ENCODE measurements at regions of chr5 and their contacts with region 1.

Region 1: GRCh38 chr5:118919016-118919415 is 69.3 kb downstream of the DTWD2 start:
- DNase-seq: no peak
- CTCF ChIP-seq: no peak

Region 2: DNA sequence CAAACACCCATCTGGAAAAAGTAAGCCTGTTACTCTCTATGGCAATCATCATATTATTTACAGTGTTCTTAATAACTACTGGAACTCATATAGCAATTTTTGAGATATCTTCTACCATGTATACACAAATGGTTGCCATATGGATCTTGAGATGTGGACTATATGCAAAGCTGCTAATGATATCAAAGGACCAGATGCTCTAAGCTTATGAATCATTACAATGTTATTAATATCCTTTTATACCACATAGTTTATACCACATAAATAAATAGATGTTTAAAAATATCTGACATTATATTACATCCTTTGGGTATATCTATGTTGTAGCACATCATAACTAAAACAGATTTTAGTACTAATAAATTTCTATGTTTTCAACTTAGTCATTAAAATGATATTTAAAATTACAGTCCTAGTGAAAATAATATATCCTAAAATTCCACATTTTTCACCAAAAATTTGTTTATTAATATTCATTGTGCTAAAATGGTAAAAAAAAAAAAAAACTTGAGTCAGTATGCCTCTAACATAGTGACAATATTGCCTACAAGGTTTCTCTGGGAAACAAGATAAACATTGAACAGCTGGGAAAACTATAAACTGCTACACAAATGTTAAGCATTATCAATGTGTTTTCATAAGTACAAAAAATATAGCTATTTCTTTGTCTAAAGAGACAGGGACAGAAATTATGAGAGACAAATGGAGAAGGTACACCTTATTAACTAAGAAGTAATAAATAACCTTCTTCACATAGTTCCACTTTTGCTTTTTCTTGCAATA is 16.2 kb before region 1 on chr5:
- CTCF ChIA-PET with region 1: interaction called, 13 read pairs
- POLR2A ChIA-PET with region 1: no interaction called
- DNase-seq: no peak
- CTCF ChIP-seq: no peak